ENCODE measurements at regions of chr9 and their contacts with region 1.

Region 1: GRCh38 chr9:21381448-21382339 is 3.5 kb downstream of the IFNA2 start:
- DNase-seq: peak; percentile 74
- ATAC-seq: peak; percentile 99
- H3K4me3 ChIP-seq: no peak overlapping the region
- H3K27ac ChIP-seq: peak overlapping the region; percentile 72
- H3K4me1 ChIP-seq: peaks cover 17% of the 10 kb centered on the region
- H3K27me3 ChIP-seq: no peaks in the 10 kb centered on the region
- CTCF ChIP-seq: no peak

Region 2: DNA sequence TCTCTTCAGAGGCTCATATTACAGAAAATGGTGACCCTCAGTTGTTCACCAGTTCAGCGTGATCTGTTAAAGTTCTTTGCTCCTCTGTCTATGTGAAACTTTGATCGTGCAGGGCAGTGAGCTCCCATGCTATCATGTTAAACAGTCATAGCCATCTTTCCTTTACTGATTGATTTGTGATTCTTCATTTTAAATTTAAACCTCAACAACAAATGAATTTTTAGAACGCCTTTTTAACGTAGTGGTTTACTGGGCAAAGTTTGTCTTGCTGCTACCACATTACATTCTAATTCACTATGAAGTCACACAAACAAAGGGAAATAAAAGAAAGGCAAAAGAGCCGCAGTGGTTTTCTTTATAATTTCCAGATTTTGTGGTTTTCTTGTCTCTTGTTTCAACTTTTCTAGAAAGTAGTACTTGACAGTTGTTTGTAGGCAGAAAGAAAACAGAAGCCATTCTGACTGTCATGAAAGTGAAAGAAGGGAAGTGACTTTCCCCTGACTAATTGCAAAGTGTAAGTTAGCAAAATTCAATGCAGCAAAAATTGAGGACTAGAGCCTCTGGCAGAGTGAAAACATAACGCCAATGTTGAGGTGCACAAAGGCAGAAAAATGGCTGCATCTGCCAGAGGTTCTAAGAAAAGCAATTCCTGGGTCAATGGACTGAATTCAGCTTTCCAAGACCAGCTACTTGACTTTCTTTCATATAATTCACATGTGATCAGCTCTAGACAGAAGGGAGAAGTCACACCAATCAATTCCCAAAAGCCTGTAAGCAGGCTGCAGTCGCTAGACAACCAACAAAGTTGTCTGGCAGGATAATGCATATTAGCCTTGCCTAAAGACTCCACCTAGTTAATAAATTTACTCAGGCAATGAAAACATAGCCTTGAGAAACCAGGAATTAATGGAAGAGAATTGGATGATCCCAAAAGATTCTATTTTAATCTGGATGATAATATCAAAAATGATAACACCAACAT is 23.9 kb before region 1 on chr9:
- CTCF ChIA-PET with region 1: no interaction called
- POLR2A ChIA-PET with region 1: no interaction called
- intact Hi-C with region 1: loop called (anchors 2 kb)
- DNase-seq: no peak
- ATAC-seq: no peak
- H3K4me3 ChIP-seq: no peak overlapping the region
- H3K27ac ChIP-seq: no peak overlapping the region
- H3K4me1 ChIP-seq: no peaks in the 10 kb centered on the region
- H3K27me3 ChIP-seq: no peaks in the 10 kb centered on the region
- CTCF ChIP-seq: no peak

Region 3: GRCh38 chr9:21395778-21396717 is 14.4 kb after region 1 on chr9:
- CTCF ChIA-PET with region 1: no interaction called
- POLR2A ChIA-PET with region 1: no interaction called
- intact Hi-C with region 1: loop called (anchors 1 kb)
- DNase-seq: peak; percentile 43
- ATAC-seq: peak; percentile 84
- H3K4me3 ChIP-seq: peak overlapping the region; percentile 76
- H3K27ac ChIP-seq: no peak overlapping the region
- H3K4me1 ChIP-seq: 0 out of 2 replicates have a peak, but pooled peaks cover 5% of the 10 kb centered on the region
- H3K27me3 ChIP-seq: peaks cover 3% of the 10 kb centered on the region; the same call in 1 of the 2 replicates
- CTCF ChIP-seq: peak; percentile 90

Region 4: GRCh38 chr9:21527579-21527978 is 145.9 kb after region 1 on chr9:
- CTCF ChIA-PET with region 1: no interaction called
- POLR2A ChIA-PET with region 1: no interaction called
- intact Hi-C with region 1: no loop called
- DNase-seq: no peak
- ATAC-seq: no peak
- H3K4me3 ChIP-seq: no peak overlapping the region
- H3K27ac ChIP-seq: no peak overlapping the region
- H3K4me1 ChIP-seq: no peaks in the 10 kb centered on the region
- H3K27me3 ChIP-seq: no peaks in the 10 kb centered on the region
- CTCF ChIP-seq: no peak

Measured in PC-3 (cell line).